ENCODE measurements at regions of chr6 and their contacts with region 1.

Region 1: DNA sequence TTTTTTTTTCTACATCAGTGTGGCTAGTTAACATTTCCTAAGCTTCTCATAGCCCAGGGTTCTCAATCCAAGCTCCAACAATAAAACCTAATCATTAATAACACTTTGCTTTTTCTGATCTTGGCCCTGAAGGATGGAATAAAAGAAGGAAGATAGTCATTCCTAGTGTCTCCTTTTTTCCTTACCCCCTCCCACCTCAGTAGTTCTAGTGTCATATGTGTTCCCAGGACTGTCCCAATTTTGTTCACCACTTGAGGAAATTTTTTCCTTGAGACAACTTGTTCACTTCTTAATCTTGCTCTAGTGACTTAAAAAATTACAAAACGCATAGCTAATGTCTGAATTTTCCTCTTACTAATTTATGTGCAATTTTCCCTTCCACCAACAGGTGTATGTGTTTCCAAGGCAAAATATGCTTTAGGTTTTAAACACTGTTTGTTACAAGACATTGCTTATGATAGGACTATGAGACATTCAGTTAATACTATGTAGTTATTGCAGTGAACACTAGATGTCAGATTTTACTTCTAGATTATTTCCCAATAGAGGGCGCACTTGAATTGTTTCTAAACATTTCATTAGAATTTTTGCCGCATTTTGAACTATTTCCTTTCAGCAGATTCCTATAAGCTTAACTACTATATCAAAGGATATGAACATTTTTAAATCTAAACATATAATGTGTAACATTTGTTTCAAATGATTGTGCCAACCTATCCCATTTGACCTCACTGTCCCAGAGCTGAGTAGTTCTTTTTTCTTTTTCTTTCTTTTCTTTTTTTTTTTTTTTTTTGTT is 18.5 kb upstream of the C6orf141 start:
- DNase-seq: peak; percentile 70
- H3K4me3 ChIP-seq: no peak overlapping the region
- H3K27ac ChIP-seq: no peak overlapping the region
- H3K4me1 ChIP-seq: no peaks in the 10 kb centered on the region
- H3K27me3 ChIP-seq: no peaks in the 10 kb centered on the region
- CTCF ChIP-seq: peak; percentile 87 to 94

Region 2: GRCh38 chr6:49462927-49463611 is 68.9 kb before region 1 on chr6 and contains the starts of genes CENPQ and MMUT:
- CTCF ChIA-PET with region 1: no interaction called
- dilution Hi-C with region 1: no loop called
- in situ Hi-C with region 1: no loop called
- intact Hi-C with region 1: loop called (anchors 5 kb)
- DNase-seq: peak; percentile 94
- H3K4me3 ChIP-seq: peak within 1 kb of the TSS; percentile 59 to 87 (median 78)
- H3K27ac ChIP-seq: peak within 1 kb of the TSS; percentile 94
- H3K4me1 ChIP-seq: no peaks in the 10 kb centered on the region
- H3K27me3 ChIP-seq: no peaks in the 10 kb centered on the region
- CTCF ChIP-seq: no peak
- total RNA-seq, gene CENPQ: 2.8 to 6.6 TPM
- total RNA-seq, gene MMUT: 8.8 to 15.8 TPM

Region 3: DNA sequence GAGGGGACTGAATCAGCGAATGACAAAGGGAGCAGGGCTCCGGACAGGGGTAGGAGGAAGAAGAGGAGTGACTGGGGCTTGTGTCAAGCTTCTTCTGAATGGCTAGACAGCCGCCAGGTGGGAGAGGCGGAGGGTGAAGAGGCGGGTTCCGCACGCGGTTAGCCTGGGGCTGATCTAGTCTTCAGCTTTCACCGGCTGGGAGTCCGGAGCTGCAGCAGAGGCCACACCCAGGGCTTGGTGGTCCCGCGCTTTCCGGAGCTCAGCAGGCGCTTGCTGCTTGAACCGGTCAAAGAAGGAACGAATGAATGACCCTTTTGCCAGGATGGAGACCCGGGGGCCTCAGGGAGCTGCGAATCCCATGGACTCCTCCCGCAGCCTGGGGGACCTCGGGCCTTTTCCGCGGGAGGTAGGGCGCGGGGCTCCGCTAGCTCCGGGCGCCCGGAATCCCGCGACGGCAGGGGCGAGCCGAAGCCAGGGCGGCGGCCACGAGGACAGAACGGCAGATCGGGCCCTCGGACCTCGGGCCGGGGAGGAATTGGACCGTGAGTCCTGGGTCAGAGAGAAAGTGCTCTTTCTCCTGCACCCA is 18.6 kb after region 1 on chr6 and contains the start of gene C6orf141:
- CTCF ChIA-PET with region 1: interaction called, 21 read pairs
- dilution Hi-C with region 1: no loop called
- in situ Hi-C with region 1: no loop called
- intact Hi-C with region 1: loop called (anchors 1 kb)
- DNase-seq: peak; percentile 85
- H3K4me3 ChIP-seq: peak within 1 kb of the TSS; percentile 88 to 93 (median 89)
- H3K27ac ChIP-seq: peak within 1 kb of the TSS; percentile 69
- H3K4me1 ChIP-seq: peaks cover 11% of the 10 kb centered on the region
- H3K27me3 ChIP-seq: no peaks in the 10 kb centered on the region
- CTCF ChIP-seq: peak in 1 of 2 donors; percentile 13
- total RNA-seq, gene C6orf141: 22.7 to 39.8 TPM

Region 4: GRCh38 chr6:49570474-49571079 is 38.6 kb after region 1 on chr6:
- CTCF ChIA-PET with region 1: interaction called, 6 read pairs
- dilution Hi-C with region 1: no loop called
- in situ Hi-C with region 1: no loop called
- intact Hi-C with region 1: loop called (anchors 1 kb)
- DNase-seq: no peak
- H3K4me3 ChIP-seq: no peak overlapping the region
- H3K27ac ChIP-seq: no peak overlapping the region
- H3K4me1 ChIP-seq: peaks cover 4% of the 10 kb centered on the region
- H3K27me3 ChIP-seq: no peaks in the 10 kb centered on the region
- CTCF ChIP-seq: peak in 1 of 2 donors; percentile 33

Region 5: GRCh38 chr6:49606696-49607390 is 74.9 kb after region 1 on chr6:
- CTCF ChIA-PET with region 1: interaction called, 6 read pairs
- dilution Hi-C with region 1: no loop called
- in situ Hi-C with region 1: loop called in 1 of 2 experiments (anchors 5 kb)
- intact Hi-C with region 1: loop called (anchors 1 kb)
- DNase-seq: peak; percentile 70
- H3K4me3 ChIP-seq: no peak overlapping the region
- H3K27ac ChIP-seq: no peak overlapping the region
- H3K4me1 ChIP-seq: peaks cover 2% of the 10 kb centered on the region
- H3K27me3 ChIP-seq: no peaks in the 10 kb centered on the region
- CTCF ChIP-seq: peak; percentile 83 to 84

Region 6: GRCh38 chr6:49849213-49849907 is 317.4 kb after region 1 on chr6:
- CTCF ChIA-PET with region 1: no interaction called
- dilution Hi-C with region 1: no loop called
- in situ Hi-C with region 1: no loop called
- intact Hi-C with region 1: loop called (anchors 2 kb)
- DNase-seq: peak; percentile 20
- H3K4me3 ChIP-seq: no peak overlapping the region
- H3K27ac ChIP-seq: no peak overlapping the region
- H3K4me1 ChIP-seq: no peaks in the 10 kb centered on the region
- H3K27me3 ChIP-seq: no peaks in the 10 kb centered on the region
- CTCF ChIP-seq: peak; percentile 45 to 55